ENCODE measurements at regions of chr2 and their contacts with region 1.

Region 1: GRCh38 chr2:27281855-27282559 is at the start of gene TRIM54:
- DNase-seq: no peak
- ATAC-seq: no peak
- H3K4me3 ChIP-seq: no peak within 1 kb of the TSS
- H3K4me3 Mint-ChIP-seq: no peak within 1 kb of the TSS
- H3K27ac ChIP-seq: no peak within 1 kb of the TSS
- H3K27ac Mint-ChIP-seq: no peak within 1 kb of the TSS
- H3K4me1 ChIP-seq: no peaks in the 10 kb centered on the region
- H3K4me1 Mint-ChIP-seq: peaks cover 0 to 8% of the 10 kb centered on the region in 2 donors
- H3K27me3 ChIP-seq: no peaks in the 10 kb centered on the region
- H3K27me3 Mint-ChIP-seq: peaks cover 23 to 25% of the 10 kb centered on the region in 2 donors
- CTCF ChIP-seq: no peak
- total RNA-seq, gene TRIM54: 0.18 to 0.21 TPM in 2 of 3 donors, not detected in the other

Region 2: DNA sequence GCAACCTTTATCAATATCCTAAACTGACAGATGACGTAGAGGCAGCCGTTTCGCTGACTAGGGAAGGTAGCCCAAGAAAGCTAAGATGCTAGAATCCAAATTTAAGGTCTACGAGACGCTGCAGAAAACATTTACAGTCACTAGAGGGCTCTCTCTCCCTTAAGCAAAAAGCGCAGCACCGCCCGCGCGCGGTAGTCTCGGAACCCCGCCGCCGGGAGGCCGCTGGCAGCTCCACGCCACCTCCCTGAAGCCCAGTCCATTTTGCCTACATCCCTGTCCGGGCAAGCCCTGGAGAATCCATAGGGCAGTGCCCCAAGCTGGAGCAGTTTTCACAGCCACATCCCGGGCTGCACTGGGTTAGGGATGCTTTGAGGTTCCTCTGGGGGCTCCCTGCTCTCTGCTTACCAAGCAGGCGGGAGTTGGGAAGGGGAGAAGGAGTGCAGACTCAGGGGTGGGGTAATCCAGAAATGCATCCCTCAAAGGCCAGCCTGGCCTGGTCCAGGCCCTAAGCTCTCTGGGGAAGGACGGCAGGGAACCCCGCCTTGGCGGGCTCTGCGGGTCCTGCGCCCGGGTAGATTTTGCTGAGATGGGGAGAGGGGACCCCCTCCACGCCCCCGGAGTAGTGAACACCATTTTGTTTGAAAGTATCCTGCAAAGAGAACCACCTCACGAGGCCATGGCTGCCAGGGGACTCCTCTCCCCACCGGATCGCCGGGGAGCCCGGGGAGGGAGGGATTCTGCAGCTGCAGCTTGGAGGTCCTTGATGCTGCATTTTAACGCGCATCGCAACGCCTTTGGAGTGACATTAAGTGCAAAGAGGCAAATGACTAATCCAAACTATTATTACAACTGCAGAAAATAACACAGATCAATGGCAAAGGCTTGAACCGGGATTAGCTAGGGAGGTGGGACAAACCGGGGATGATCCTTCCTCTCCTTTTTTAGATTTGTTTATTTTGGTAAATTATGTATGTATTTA is 435.4 kb before region 1 on chr2:
- intact Hi-C with region 1: loop called (anchors 10 kb)
- DNase-seq: peak; percentile 32 to 79
- ATAC-seq: peak; percentile 74 to 86 (median 78)
- H3K4me3 ChIP-seq: no peak overlapping the region
- H3K4me3 Mint-ChIP-seq: peak overlapping the region; percentile 65
- H3K27ac ChIP-seq: no peak overlapping the region
- H3K27ac Mint-ChIP-seq: no peak overlapping the region
- H3K4me1 ChIP-seq: peaks cover 28% of the 10 kb centered on the region
- H3K4me1 Mint-ChIP-seq: peaks cover 0 to 13% of the 10 kb centered on the region in 2 donors
- H3K27me3 ChIP-seq: peaks cover 46% of the 10 kb centered on the region
- H3K27me3 Mint-ChIP-seq: peaks cover 28 to 31% of the 10 kb centered on the region in 2 donors
- CTCF ChIP-seq: peak; percentile 67

Region 3: DNA sequence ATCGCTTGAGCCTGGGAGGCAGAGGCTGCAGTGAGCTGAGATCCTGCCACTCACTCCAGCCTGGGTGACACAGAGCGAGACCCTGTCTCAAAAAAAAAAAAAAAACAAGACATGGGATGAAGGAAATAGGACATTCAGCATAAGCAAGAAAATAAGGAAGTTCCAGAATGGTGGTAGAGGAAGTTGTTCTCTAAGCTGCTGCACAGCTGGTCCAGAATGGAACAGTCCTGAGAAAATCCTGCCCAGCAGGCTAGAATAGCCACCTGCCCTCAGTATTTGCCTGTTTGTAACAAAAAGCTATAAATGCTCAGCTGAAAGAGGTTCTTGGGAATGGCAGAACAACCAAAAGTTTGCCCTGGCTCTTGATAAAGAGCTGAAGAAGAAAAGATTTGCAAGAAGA is 322.7 kb before region 1 on chr2:
- intact Hi-C with region 1: loop called (anchors 1 kb)
- DNase-seq: no peak
- ATAC-seq: no peak
- H3K4me3 ChIP-seq: no peak overlapping the region
- H3K4me3 Mint-ChIP-seq: no peak overlapping the region
- H3K27ac ChIP-seq: no peak overlapping the region
- H3K27ac Mint-ChIP-seq: no peak overlapping the region
- H3K4me1 ChIP-seq: no peaks in the 10 kb centered on the region
- H3K4me1 Mint-ChIP-seq: no peaks in the 10 kb centered on the region
- H3K27me3 ChIP-seq: peaks cover 6% of the 10 kb centered on the region
- H3K27me3 Mint-ChIP-seq: peaks cover 10% of the 10 kb centered on the region in 2 donors
- CTCF ChIP-seq: no peak

Region 4: DNA sequence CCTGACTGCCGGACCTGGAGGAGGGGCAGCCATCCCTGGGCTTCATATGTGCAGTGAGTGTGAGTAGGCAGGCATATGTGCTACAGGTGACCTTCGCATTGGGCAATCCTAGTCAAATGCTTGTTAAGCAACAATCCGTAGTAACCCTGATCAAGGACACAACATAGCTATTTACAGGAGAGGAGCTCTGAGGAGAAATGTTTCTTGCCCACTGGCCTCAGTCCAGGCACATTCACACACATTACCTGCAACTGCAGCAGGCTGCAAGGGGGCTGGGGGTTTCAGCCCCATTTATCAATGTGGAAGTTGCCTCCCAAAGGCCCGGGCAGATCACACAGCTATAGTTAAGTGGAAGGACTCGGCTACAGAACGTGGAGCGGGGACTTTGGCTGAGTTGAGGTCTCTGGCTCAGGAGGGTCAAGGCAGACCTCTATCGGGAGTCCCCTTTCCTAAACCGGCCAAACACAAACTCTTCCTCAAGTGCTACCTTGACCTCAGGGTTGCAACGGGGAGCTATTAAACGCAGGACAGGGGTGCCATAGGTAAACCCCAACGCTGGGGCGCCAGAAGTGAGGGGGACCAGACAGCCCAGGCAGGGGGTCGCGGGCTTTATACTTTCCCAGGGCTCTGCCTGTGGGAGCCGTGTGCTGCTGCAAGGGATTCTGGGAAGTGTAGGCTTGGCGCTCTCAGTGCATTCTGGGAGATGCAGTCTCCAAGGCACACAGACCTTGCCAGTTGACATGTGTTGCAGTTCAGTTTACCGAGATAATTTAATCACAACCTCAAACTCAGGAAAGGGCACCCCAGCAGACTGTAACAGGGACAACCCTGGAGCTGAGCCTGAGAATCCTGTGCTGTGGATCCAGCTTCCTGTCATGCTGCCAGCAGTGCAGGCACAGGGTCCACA is 186.0 kb before region 1 on chr2:
- intact Hi-C with region 1: loop called (anchors 1 kb)
- DNase-seq: peak in 1 of 2 donors; percentile 69
- ATAC-seq: peak; percentile 63 to 94 (median 88)
- H3K4me3 ChIP-seq: no peak overlapping the region
- H3K4me3 Mint-ChIP-seq: peak overlapping the region; percentile 61
- H3K27ac ChIP-seq: no peak overlapping the region
- H3K27ac Mint-ChIP-seq: no peak overlapping the region
- H3K4me1 ChIP-seq: peaks cover 9% of the 10 kb centered on the region
- H3K4me1 Mint-ChIP-seq: peaks cover 0 to 16% of the 10 kb centered on the region in 2 donors
- H3K27me3 ChIP-seq: no peaks in the 10 kb centered on the region
- H3K27me3 Mint-ChIP-seq: no peaks in the 10 kb centered on the region
- CTCF ChIP-seq: no peak

Region 5: GRCh38 chr2:27102329-27102728 is 179.7 kb before region 1 on chr2:
- intact Hi-C with region 1: loop called (anchors 1 kb)
- DNase-seq: no peak
- ATAC-seq: no peak
- H3K4me3 ChIP-seq: no peak overlapping the region
- H3K4me3 Mint-ChIP-seq: no peak overlapping the region
- H3K27ac ChIP-seq: no peak overlapping the region
- H3K27ac Mint-ChIP-seq: no peak overlapping the region
- H3K4me1 ChIP-seq: no peaks in the 10 kb centered on the region
- H3K4me1 Mint-ChIP-seq: no peaks in the 10 kb centered on the region
- H3K27me3 ChIP-seq: no peaks in the 10 kb centered on the region
- H3K27me3 Mint-ChIP-seq: peaks cover 0 to 2% of the 10 kb centered on the region in 2 donors
- CTCF ChIP-seq: no peak

Region 6: GRCh38 chr2:27174316-27175040 is 107.5 kb before region 1 on chr2:
- intact Hi-C with region 1: loop called (anchors 5 kb)
- DNase-seq: no peak
- ATAC-seq: no peak
- H3K4me3 ChIP-seq: no peak overlapping the region
- H3K4me3 Mint-ChIP-seq: no peak overlapping the region
- H3K27ac ChIP-seq: no peak overlapping the region
- H3K27ac Mint-ChIP-seq: no peak overlapping the region
- H3K4me1 ChIP-seq: peaks cover 6% of the 10 kb centered on the region
- H3K4me1 Mint-ChIP-seq: peaks cover 0 to 5% of the 10 kb centered on the region in 2 donors
- H3K27me3 ChIP-seq: no peaks in the 10 kb centered on the region
- H3K27me3 Mint-ChIP-seq: peaks cover 7 to 14% of the 10 kb centered on the region in 2 donors
- CTCF ChIP-seq: no peak

Region 7: GRCh38 chr2:27559228-27559627 is 277.2 kb after region 1 on chr2:
- intact Hi-C with region 1: no loop called
- DNase-seq: no peak
- ATAC-seq: no peak
- H3K4me3 ChIP-seq: no peak overlapping the region
- H3K4me3 Mint-ChIP-seq: no peak overlapping the region
- H3K27ac ChIP-seq: no peak overlapping the region
- H3K27ac Mint-ChIP-seq: no peak overlapping the region
- H3K4me1 ChIP-seq: no peaks in the 10 kb centered on the region
- H3K4me1 Mint-ChIP-seq: no peaks in the 10 kb centered on the region
- H3K27me3 ChIP-seq: peaks cover 4% of the 10 kb centered on the region
- H3K27me3 Mint-ChIP-seq: peaks cover 16 to 42% of the 10 kb centered on the region in 2 donors
- CTCF ChIP-seq: no peak